Mammary epithelial cell (primary cell): ENCODE measurements at regions of chr17 and their contacts with region 1.

Region 1: DNA sequence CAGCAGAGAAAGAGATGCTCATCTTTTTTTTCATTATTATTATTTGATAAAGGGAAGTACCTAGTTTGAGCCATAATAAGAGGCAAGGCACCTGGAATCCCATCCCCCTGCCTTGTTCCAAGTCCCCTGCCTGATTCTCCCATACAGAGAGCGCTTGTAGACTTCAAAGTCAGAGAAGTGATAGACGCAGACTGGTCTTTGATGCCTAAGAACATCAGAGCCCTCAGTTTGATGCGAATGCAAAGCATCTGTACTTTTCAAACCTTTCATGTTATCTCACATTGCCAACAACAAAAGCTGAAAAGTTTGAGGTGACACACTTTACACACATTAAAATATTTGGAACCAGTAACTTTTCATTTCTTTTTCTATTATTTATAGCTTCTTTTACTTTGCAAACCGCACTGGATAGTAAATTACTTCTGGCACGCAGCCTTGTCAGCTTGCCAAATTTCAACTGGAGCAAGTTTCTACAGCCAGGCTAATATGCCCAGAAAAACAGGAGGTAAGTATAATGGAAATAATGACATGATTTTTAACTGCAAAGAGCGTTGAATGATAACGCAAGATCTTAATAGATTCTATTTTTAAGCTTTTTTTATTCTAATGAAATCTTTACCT is 5.9 kb upstream of the UTP6 start:
- DNase-seq: peak; percentile 39
- H3K4me3 ChIP-seq: no peak overlapping the region
- H3K27ac ChIP-seq: no peak overlapping the region
- H3K4me1 ChIP-seq: peaks cover 6% of the 10 kb centered on the region
- H3K27me3 ChIP-seq: no peaks in the 10 kb centered on the region
- CTCF ChIP-seq: no peak

Region 2: DNA sequence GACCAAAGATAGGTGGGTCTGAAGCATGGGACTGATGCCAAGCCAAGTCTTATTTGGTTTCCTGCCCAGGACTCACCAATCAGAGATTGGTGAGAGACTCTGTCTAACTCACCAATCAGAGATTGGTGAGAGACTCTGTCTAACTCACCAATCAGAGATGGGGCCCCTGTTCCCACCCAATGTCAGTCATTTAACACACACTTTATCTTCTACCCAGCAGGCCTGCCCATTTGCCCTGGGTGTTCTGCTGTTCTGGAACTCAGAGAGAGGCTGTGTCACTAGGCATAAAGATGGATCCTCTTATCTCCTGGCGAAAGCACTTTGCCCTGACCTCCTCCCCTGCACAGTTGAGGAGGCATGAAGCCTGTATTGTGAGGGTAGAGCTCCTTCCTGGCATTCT is 229.4 kb after region 1 on chr17:
- CTCF ChIA-PET with region 1: no interaction called
- dilution Hi-C with region 1: no loop called
- in situ Hi-C with region 1: no loop called
- intact Hi-C with region 1: loop called (anchors 10 kb)
- DNase-seq: no peak
- H3K4me3 ChIP-seq: no peak overlapping the region
- H3K27ac ChIP-seq: no peak overlapping the region
- H3K4me1 ChIP-seq: peaks cover 8% of the 10 kb centered on the region
- H3K27me3 ChIP-seq: no peaks in the 10 kb centered on the region
- CTCF ChIP-seq: no peak